ENCODE measurements at regions of chr3 and their contacts with region 1.

Region 1: GRCh38 chr3:28726840-28727239 is 378.2 kb upstream of the AZI2 start:
- DNase-seq: peak; percentile 19 to 23
- ATAC-seq: peak in 5 of 8 donors; percentile 57 to 83 (median 59)
- H3K4me3 ChIP-seq: no peak overlapping the region
- H3K27ac ChIP-seq: no peak overlapping the region
- H3K4me1 ChIP-seq: no peaks in the 10 kb centered on the region
- H3K27me3 ChIP-seq: no peaks in the 10 kb centered on the region
- CTCF ChIP-seq: peak in 8 of 9 donors; percentile 20 to 68 (median 60)

Region 2: GRCh38 chr3:28462866-28463265 is 264.0 kb before region 1 on chr3:
- intact Hi-C with region 1: no loop called
- DNase-seq: no peak
- ATAC-seq: no peak
- H3K4me3 ChIP-seq: no peak overlapping the region
- H3K27ac ChIP-seq: no peak overlapping the region
- H3K4me1 ChIP-seq: no peaks in the 10 kb centered on the region
- H3K27me3 ChIP-seq: no peaks in the 10 kb centered on the region
- CTCF ChIP-seq: no peak

Region 3: GRCh38 chr3:28476194-28476593 is 250.6 kb before region 1 on chr3:
- intact Hi-C with region 1: loop called in 4 of 10 experiments (anchors 10 kb)
- DNase-seq: no peak
- ATAC-seq: no peak
- H3K4me3 ChIP-seq: no peak overlapping the region
- H3K27ac ChIP-seq: no peak overlapping the region
- H3K4me1 ChIP-seq: no peaks in the 10 kb centered on the region
- H3K27me3 ChIP-seq: no peaks in the 10 kb centered on the region
- CTCF ChIP-seq: peak in 7 of 9 donors; percentile 54 to 70 (median 60)

Region 4: GRCh38 chr3:28651159-28651558 is 75.7 kb before region 1 on chr3:
- intact Hi-C with region 1: loop called in 1 of 10 experiments (anchors 5 kb)
- DNase-seq: no peak
- ATAC-seq: no peak
- H3K4me3 ChIP-seq: no peak overlapping the region
- H3K27ac ChIP-seq: no peak overlapping the region
- H3K4me1 ChIP-seq: peaks cover 0 to 3% (median 0%) of the 10 kb centered on the region in 9 donors
- H3K27me3 ChIP-seq: no peaks in the 10 kb centered on the region
- CTCF ChIP-seq: no peak

Region 5: DNA sequence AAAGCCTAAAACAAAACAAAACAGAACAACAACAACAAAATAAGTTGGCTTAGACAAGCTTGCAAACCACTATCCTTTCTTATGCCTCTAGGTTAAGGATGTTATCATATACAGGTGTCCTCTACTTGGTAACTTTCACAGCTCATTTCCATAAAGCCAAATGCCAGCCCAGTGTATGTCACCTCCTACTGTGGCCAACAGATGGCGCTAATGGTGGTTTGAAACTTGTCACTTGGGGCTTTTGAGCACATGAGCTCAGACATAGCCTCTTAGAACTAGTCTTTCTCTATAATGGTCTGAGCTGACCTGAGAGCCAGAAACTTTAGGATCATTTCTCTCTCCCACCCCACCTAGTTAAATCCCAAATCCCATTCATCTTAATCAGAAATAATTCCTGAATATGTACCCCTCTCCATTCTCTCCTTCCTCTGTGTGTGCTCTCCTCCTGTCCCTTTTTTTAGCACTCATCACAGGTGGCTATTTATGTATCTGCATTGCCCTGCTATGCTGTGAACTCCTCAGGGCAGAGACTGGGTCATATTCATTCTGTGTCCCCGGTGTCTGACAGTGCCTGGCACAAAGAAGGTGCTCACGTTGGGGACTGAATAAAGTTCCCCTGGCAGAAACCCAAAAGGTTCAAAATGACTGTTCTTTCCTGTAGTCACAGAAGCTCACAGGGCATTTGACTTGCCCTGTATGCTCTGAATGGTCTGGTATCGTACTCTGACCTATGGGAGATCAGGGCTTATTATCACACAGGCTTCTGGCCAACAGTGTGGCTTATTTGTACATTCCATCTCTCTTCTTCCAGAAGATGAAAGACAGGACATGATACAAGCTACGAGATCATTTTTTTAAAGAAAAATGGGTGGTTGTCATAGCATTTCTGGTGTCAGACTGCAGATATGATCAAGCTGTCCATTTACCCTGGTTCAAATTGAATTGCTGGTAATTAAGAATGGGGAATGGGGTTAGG is 58.9 kb before region 1 on chr3:
- intact Hi-C with region 1: loop called in 3 of 10 experiments (anchors 1 to 5 kb)
- DNase-seq: peak; percentile 22 to 62
- ATAC-seq: peak; percentile 82 to 97 (median 93)
- H3K4me3 ChIP-seq: no peak overlapping the region
- H3K27ac ChIP-seq: peak overlapping the region in 8 of 10 donors; percentile 8 to 71 (median 58)
- H3K4me1 ChIP-seq: peaks cover 0 to 24% (median 3%) of the 10 kb centered on the region in 9 donors
- H3K27me3 ChIP-seq: no peaks in the 10 kb centered on the region
- CTCF ChIP-seq: peak; percentile 62 to 84 (median 81)

Measured in heart right ventricle (tissue), 16 donors.